Activated naive CD4-positive, alpha-beta T cell treated with anti-CD3 and anti-CD28 coated beads for 36 hours (primary cell): ENCODE measurements at regions of chr9 and their contacts with region 1.

Region 1: DNA sequence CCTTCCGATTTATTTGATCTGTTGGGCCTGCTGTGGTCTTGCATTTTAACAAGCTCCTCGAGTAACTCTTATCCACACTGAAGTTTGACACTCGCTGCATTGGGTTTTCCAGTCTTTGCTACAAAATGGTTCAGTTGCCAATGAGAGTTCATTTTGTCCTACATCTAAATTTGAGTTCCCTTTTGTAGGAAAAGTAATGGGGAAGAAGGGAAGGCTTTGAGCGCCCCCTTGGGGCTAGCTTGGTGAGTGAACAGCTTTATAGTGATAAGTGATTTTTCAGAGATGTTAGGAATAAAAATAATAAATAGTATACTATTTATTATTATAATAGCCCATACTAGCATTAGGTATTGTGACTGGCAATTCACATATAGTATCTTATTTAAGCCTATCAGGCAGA is 89.9 kb upstream of the GNAQ start:
- DNase-seq: peak; percentile 79
- H3K4me3 Mint-ChIP-seq: no peak overlapping the region
- H3K27ac Mint-ChIP-seq: no peak overlapping the region
- H3K4me1 Mint-ChIP-seq: peaks cover 33% of the 10 kb centered on the region
- H3K27me3 Mint-ChIP-seq: no peaks in the 10 kb centered on the region

Region 2: GRCh38 chr9:77177161-77177893 is 944.2 kb before region 1 on chr9 and contains the start of gene VPS13A:
- CTCF ChIA-PET with region 1: interaction called, 3 read pairs
- intact Hi-C with region 1: loop called (anchors 2 kb)
- DNase-seq: peak; percentile 96
- H3K4me3 Mint-ChIP-seq: peak within 1 kb of the TSS; percentile 80
- H3K27ac Mint-ChIP-seq: peak within 1 kb of the TSS; percentile 79
- H3K4me1 Mint-ChIP-seq: peaks cover 23% of the 10 kb centered on the region
- H3K27me3 Mint-ChIP-seq: no peaks in the 10 kb centered on the region
- total RNA-seq, gene VPS13A: 26.8 to 26.9 TPM

Region 3: GRCh38 chr9:77456829-77457437 is 664.6 kb before region 1 on chr9:
- CTCF ChIA-PET with region 1: interaction called, 5 read pairs
- intact Hi-C with region 1: loop called (anchors 1 kb)
- DNase-seq: peak; percentile 93
- H3K4me3 Mint-ChIP-seq: no peak overlapping the region
- H3K27ac Mint-ChIP-seq: no peak overlapping the region
- H3K4me1 Mint-ChIP-seq: peaks cover 24% of the 10 kb centered on the region
- H3K27me3 Mint-ChIP-seq: no peaks in the 10 kb centered on the region

Region 4: DNA sequence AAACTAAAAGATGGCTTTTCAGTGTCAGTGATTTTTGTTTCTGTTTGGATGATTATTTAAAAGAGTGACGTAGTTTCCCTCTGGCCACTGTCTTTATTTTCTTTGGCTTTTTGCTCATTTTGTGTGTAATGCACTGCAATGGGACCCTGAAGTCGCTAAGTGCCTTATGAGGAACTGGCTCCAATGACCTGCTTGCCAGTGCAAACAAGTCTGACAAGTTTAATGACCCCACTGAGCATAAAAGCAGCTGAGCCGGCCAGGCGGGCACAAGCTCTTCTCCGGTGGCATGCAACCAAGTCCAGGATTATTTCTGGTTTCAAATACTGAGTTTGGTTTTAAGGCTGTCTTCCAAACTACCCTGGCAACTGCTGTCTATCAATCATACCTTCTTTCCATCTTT is 457.7 kb before region 1 on chr9:
- CTCF ChIA-PET with region 1: no interaction called
- intact Hi-C with region 1: loop called (anchors 1 kb)
- DNase-seq: no peak
- H3K4me3 Mint-ChIP-seq: no peak overlapping the region
- H3K27ac Mint-ChIP-seq: no peak overlapping the region
- H3K4me1 Mint-ChIP-seq: no peaks in the 10 kb centered on the region
- H3K27me3 Mint-ChIP-seq: peaks cover 6% of the 10 kb centered on the region

Region 5: DNA sequence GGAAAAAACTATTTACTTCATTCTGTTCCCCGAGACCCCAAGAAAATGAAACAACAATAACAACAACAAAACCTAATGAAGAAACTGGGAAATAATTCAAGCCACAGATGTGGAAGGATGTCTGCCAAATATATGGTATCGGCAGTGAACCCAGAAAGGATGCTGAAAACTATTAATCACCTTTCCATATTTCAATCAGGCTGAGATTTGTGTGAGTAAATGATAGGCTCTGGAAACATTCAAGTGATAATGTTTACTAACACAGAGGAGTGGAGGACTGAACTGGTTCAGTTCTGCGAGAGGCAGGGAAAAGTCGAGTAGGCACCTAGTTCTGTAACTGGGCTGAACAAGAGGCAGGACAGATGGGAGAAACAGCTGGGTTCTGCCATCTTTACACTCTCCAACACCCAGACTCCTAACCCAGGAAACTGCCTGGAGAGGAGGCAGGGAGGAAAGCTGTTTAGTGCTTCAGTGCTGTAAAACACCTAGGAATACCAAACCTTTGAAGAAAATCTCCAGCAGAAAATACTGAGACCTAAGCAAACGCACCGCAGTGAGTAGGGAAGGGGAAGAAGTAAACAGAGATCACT is 376.6 kb before region 1 on chr9:
- CTCF ChIA-PET with region 1: interaction called, 3 read pairs
- intact Hi-C with region 1: loop called (anchors 2 kb)
- DNase-seq: no peak
- H3K4me3 Mint-ChIP-seq: no peak overlapping the region
- H3K27ac Mint-ChIP-seq: no peak overlapping the region
- H3K4me1 Mint-ChIP-seq: peaks cover 45% of the 10 kb centered on the region
- H3K27me3 Mint-ChIP-seq: no peaks in the 10 kb centered on the region

Region 6: DNA sequence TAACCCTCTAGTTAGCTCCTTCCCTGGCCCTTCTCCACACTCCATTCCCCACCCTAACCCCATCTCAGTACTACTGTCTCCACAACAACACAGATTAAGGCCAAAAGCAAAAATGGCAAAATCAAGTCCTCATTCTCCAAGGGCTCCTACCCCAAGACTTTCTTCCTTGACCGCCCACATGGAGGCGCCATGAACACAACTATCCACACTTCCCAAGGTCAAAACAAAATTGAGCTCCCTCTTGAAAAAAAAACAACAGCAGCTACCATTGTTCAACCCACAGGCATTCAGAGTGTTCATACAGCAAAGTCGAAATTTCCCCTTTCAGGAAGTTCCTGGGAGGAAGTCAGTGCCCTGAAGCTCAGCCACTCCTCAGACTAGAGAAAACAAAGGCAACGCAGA is 144.3 kb before region 1 on chr9:
- CTCF ChIA-PET with region 1: interaction called, 11 read pairs
- intact Hi-C with region 1: loop called (anchors 1 kb)
- DNase-seq: peak; percentile 80
- H3K4me3 Mint-ChIP-seq: peak overlapping the region; percentile 15
- H3K27ac Mint-ChIP-seq: peak overlapping the region; percentile 83
- H3K4me1 Mint-ChIP-seq: peaks cover 55% of the 10 kb centered on the region
- H3K27me3 Mint-ChIP-seq: no peaks in the 10 kb centered on the region

Region 7: GRCh38 chr9:78023003-78023741 is 98.3 kb before region 1 on chr9:
- CTCF ChIA-PET with region 1: no interaction called
- intact Hi-C with region 1: no loop called
- DNase-seq: peak; percentile 34
- H3K4me3 Mint-ChIP-seq: peak overlapping the region; percentile 4
- H3K27ac Mint-ChIP-seq: no peak overlapping the region
- H3K4me1 Mint-ChIP-seq: peaks cover 65% of the 10 kb centered on the region
- H3K27me3 Mint-ChIP-seq: no peaks in the 10 kb centered on the region

Region 8: DNA sequence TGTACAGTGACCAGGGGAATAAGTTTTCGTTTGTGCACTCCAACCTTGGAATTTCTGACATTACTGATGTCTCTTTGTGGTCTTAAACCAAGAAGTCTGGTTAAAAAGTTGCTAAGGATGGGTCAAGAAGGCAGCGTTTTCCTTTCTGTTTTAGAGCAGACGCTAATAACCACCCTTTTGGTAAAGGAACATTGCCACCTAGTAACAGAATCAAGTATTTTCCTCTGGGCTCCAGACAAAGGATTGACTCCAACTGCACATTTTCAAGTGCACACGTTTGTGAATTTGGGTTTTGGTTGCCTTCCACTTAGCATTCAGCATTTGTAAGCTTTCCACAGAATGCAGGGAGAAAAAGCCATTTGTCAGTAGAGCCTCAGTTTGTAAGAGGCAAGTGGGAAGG is 92.2 kb after region 1 on chr9:
- CTCF ChIA-PET with region 1: interaction called, 9 read pairs
- intact Hi-C with region 1: loop called (anchors 1 kb)
- DNase-seq: no peak
- H3K4me3 Mint-ChIP-seq: no peak overlapping the region
- H3K27ac Mint-ChIP-seq: no peak overlapping the region
- H3K4me1 Mint-ChIP-seq: peaks cover 31% of the 10 kb centered on the region
- H3K27me3 Mint-ChIP-seq: no peaks in the 10 kb centered on the region

Region 9: DNA sequence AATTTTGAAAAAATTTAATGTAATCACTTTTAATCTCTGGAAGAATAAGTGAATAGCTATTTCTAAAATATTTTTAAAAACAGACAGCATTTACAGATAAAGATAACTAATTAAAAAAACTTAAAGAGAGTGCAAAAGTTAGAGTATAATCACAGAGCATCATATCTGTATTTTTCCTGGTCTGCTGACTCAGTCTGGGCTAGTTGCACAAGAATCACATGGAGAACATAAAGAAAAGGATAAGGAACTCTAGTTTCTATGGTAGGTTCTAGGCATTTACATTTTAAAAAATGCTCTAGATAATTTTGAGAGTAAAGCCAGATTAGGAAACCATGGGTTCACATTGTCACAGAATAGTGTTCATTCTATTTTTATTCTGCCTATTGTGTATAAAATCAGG is 522.9 kb after region 1 on chr9:
- CTCF ChIA-PET with region 1: no interaction called
- intact Hi-C with region 1: no loop called
- DNase-seq: no peak
- H3K4me3 Mint-ChIP-seq: no peak overlapping the region
- H3K27ac Mint-ChIP-seq: no peak overlapping the region
- H3K4me1 Mint-ChIP-seq: no peaks in the 10 kb centered on the region
- H3K27me3 Mint-ChIP-seq: peaks cover 3% of the 10 kb centered on the region

Region 10: DNA sequence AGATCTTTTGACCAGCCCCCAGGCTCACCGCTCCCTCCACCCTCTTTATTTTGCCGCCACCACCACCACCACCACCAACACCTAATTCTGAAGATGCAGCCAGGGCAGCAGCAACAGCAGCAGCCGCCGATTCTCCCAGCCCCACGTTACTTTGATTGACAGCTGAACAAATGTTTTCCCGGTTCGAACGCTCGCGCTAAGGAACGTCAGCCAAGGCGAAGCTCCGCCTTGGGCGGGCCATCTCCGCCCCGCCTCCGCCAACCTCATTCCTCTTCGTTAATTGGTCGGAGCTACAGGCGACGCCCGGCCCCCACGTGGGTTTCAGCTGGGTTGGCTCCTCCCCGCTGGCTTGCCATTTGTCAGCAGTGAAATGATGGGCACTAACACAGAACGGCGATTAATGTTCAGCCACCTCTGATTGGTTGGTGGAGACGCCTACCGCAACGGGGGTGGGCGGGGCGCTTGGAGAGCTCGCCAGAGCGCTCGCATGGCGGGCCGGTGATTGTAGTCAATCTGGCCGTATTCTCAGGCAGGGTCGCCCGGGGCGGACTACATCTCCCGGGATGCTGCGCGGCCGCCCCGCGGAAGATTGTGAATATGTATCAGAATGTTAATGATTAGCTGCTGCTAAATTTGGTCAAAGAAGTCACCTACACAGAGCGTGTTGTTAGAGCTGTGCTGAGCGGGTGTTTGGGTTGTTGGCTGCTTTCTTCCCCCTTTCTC is 1450.0 kb after region 1 on chr9 and contains the start of gene TLE4:
- CTCF ChIA-PET with region 1: no interaction called
- intact Hi-C with region 1: no loop called
- DNase-seq: peak; percentile 99
- H3K4me3 Mint-ChIP-seq: peak within 1 kb of the TSS; percentile 80
- H3K27ac Mint-ChIP-seq: peak within 1 kb of the TSS; percentile 46
- H3K4me1 Mint-ChIP-seq: peaks cover 26% of the 10 kb centered on the region
- H3K27me3 Mint-ChIP-seq: peaks cover 6% of the 10 kb centered on the region
- total RNA-seq, gene TLE4: 11.2 to 13.1 TPM